Body of pancreas (tissue), 4 donors: ENCODE measurements at regions of chr15 and their contacts with region 1.

Region 1: DNA sequence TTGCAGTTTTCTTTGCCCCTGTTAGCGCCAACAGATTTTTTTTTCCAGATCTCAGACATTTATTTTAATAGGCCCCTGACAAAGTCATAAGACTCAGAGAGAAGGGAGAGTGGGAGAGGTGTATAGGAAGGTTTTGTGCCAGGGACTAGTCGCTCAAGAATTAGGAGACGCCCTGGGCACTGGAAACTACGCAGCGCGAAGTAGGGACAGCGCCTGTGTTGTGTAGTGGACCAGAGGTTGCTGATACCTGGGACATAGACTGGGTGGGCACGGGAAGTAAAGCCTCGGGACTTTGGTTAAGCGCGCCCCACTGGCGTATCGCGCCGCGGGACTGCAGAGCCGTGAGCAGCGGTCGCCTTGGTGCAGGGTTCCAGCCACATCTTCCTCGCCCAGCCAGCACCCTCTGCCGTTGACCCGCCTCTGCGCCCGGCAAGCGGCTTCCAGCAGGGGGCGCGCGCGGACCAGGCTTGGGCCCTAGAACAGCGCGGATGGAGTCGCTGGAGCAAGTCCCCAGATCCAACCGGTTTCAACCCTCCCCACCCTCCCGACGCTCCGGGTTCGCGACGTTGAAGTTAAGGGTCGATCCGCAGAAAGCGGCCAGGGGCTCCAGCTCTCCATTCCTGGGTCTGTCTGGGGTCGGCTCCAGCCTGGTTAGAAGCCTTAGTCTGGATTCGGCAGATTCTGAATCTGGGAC is 3.0 kb upstream of the ISLR2 start:
- DNase-seq: peak; percentile 85 to 89 (median 87)
- ATAC-seq: peak; percentile 88
- H3K4me3 ChIP-seq: no peak overlapping the region
- H3K27ac ChIP-seq: no peak overlapping the region
- H3K4me1 ChIP-seq: peaks cover 21% of the 10 kb centered on the region
- H3K27me3 ChIP-seq: peaks cover 0 to 33% of the 10 kb centered on the region in 2 donors
- CTCF ChIP-seq: peak; percentile 88 to 98 (median 95)
- POLR2A ChIP-seq: no peak

Region 2: GRCh38 chr15:74062671-74063070 is 64.7 kb before region 1 on chr15:
- intact Hi-C with region 1: no loop called
- DNase-seq: peak in 1 of 4 donors; percentile 7
- ATAC-seq: no peak
- H3K4me3 ChIP-seq: no peak overlapping the region
- H3K27ac ChIP-seq: no peak overlapping the region
- H3K4me1 ChIP-seq: peaks cover 20% of the 10 kb centered on the region
- H3K27me3 ChIP-seq: no peaks in the 10 kb centered on the region
- CTCF ChIP-seq: no peak
- POLR2A ChIP-seq: no peak

Region 3: GRCh38 chr15:74307827-74308644 is 180.6 kb after region 1 on chr15:
- intact Hi-C with region 1: loop called (anchors 5 kb)
- DNase-seq: peak; percentile 59 to 69 (median 64)
- ATAC-seq: peak; percentile 72
- H3K4me3 ChIP-seq: no peak overlapping the region
- H3K27ac ChIP-seq: no peak overlapping the region
- H3K4me1 ChIP-seq: no peaks in the 10 kb centered on the region
- H3K27me3 ChIP-seq: peaks cover 0 to 10% of the 10 kb centered on the region in 2 donors
- CTCF ChIP-seq: peak; percentile 53 to 68 (median 60)
- POLR2A ChIP-seq: no peak